Activated T-helper 1 cell treated with anti-CD3 and anti-CD28 coated beads, Interleukin-12 subunit alpha, Interleukin-12 subunit beta, Interleukin-2, Interleukin-4 antibody, amounts not matched to agents 30 ng/mL and 10 ng/mL and 1 ng/mL, durations not matched to agents 14 hours and 24 hours and 36 hours (primary cell): ENCODE measurements at regions of chr7 and their contacts with region 1.

Region 1: DNA sequence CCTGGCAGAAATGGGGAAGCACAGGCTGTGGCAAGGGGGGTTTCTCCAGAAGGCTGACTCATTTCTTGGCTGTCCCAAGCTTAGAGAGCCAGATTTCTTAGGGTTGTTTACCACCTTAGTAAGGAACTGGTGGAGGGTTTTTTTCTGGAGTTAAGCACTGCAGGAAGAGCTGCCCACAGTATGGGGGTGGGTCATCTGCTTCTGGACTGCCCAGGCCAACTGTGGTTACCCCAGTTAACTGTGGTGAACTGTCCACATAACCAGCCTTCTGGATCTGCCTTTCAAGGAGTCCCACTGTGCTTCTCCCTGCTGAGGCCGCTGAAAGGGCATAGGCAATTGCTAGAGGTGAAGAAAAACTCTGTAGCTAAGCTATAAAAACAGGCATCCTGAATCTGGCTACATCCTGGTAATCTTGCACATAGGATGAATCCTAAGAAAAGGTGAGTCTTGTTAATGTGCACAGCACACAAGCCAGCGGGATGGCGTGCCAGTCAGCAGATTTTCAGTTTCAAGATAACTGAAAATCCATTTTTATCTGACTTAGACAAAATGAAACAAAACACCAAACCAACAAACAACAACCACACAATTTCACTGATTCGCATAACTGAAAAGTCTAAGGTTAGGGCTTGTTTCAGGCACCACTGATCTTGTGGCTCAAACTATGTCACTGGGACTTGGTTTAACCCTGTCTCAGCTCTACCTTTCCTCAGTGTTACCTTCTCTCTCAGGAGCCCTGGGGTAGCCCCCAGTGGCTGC is 21.6 kb upstream of the TSPAN33 start:
- DNase-seq: peak; percentile 14
- H3K4me3 Mint-ChIP-seq: peak overlapping the region; percentile 22
- H3K27ac Mint-ChIP-seq: peak overlapping the region; percentile 85
- H3K4me1 Mint-ChIP-seq: peaks cover 39% of the 10 kb centered on the region
- H3K27me3 Mint-ChIP-seq: peaks cover 15% of the 10 kb centered on the region

Region 2: DNA sequence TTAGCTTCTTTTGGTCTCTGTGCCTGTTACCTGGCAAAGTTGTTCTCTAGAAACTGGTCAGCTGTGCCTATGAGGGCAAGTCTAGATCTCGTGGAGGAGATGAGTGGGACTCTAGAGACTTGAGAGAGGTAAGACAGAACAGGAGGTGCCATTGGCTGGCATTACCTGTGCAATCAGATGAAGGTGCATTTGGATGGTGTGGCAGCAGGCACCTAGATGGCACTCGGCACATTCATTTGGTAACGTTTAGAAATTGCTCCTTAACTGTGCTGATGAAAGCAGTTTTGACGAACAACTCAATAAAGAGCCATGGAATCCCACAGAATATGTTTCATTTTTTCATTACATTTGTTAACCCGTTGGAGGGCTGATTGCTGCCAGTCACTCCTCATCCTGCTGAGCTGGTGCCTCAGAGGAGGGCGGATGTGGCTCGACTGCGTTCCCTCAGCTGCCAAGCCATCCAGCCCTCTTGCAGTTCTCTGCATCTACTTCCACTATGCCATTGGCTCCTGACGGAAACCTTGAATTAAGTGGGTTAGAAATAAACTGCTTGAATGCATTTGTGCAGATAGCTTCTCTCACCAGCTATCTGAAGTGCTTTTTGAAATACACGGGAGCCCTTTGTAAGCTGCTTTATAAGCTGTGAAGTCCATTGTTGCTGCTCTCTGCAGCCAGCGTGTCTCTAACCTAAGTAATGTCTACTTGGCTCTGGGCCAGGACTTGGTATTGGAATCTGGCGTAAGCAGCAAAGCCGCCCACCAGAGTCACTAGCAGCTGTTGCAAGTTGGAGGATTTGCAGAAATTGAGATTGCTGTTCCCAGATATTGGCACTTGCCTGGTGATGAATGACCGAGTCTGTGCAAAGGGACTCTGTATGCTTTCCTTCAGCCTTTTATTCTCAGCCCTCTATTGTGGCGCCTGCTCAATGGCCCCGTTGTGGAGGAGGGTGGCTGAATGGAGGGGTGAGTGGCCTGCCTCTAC is 1179.1 kb before region 1 on chr7:
- intact Hi-C with region 1: no loop called
- DNase-seq: no peak
- H3K4me3 Mint-ChIP-seq: no peak overlapping the region
- H3K27ac Mint-ChIP-seq: no peak overlapping the region
- H3K4me1 Mint-ChIP-seq: peaks cover 7% of the 10 kb centered on the region
- H3K27me3 Mint-ChIP-seq: no peaks in the 10 kb centered on the region

Region 3: GRCh38 chr7:128963327-128963757 is 159.6 kb before region 1 on chr7:
- intact Hi-C with region 1: loop called (anchors 1 kb)
- DNase-seq: peak; percentile 34
- H3K4me3 Mint-ChIP-seq: peak overlapping the region; percentile 57
- H3K27ac Mint-ChIP-seq: peak overlapping the region; percentile 72
- H3K4me1 Mint-ChIP-seq: peaks cover 43% of the 10 kb centered on the region
- H3K27me3 Mint-ChIP-seq: no peaks in the 10 kb centered on the region

Region 4: DNA sequence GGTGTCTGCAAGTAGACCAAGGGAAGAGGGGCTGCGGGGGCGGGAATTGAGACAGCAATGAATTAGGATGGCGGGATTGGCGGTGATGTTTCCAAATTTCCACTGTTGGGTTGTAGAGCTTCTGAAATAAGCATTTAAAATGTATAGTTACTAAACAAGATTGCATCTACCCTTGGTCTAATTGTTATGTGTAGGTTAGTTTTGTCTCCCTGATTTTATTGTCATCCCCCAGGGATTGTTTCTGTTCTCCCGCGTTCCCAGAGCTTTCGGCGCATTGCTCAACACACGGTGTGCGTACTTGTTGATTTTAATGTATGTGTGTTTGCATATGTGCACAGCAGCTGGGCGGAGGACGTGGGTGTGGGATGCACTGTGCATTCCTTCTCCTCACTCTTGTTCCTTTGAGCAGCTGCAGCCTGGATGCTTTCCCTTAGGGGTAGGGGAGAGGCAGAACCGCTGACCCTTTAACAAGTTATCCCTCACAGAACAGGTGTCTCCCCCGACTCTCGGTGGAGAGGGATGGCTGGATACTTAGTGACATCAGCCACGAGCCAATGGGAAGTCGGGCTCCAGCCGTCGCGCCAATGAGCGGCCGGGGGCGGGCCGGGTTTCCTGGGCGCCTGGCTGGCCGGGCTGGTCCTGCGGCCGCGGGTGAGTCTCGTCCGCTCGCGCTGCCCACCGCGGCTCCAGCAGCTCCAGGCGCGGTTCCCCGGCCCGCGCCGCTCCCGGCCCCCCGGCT is 21.3 kb after region 1 on chr7 and contains the start of gene TSPAN33:
- intact Hi-C with region 1: loop called (anchors 1 kb)
- DNase-seq: peak; percentile 67
- H3K4me3 Mint-ChIP-seq: peak within 1 kb of the TSS; percentile 89
- H3K27ac Mint-ChIP-seq: peak within 1 kb of the TSS; percentile 27
- H3K4me1 Mint-ChIP-seq: peaks cover 16% of the 10 kb centered on the region
- H3K27me3 Mint-ChIP-seq: peaks cover 25% of the 10 kb centered on the region
- total RNA-seq, gene TSPAN33: 9.5 and 9.8 TPM in 2 replicates

Region 5: DNA sequence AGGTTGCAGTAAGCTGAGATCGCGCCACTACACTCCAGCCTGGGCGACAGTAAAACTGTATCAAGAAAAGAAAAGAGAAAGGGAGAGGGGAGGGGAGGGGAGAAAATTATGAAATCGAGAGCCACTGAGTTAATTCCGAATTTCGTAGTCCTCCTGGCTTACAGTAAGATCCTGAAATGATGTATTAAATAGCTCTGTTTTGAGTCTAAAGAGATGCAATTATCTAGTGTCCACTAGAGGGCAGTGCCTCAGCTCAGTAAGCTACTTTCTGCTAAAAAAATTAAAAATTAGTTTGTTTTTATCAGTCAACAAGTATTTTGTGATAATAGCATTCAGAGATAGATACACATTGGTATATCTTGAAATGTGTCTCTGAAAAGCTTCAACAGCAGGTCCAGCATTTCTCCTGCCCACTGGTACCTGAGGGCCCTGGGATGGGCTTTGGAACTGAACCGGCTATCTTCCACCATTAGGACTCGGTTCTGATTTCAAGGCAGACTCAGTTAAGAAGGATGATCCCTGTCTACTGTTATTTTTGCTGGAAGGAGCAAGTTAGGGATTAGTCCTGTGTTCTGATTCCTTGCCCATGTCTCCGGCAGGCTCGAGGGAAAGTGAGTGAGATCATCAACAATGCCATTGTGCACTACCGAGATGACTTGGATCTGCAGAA is 41.1 kb after region 1 on chr7:
- intact Hi-C with region 1: loop called (anchors 2 kb)
- DNase-seq: no peak
- H3K4me3 Mint-ChIP-seq: no peak overlapping the region
- H3K27ac Mint-ChIP-seq: no peak overlapping the region
- H3K4me1 Mint-ChIP-seq: peaks cover 5% of the 10 kb centered on the region
- H3K27me3 Mint-ChIP-seq: no peaks in the 10 kb centered on the region

Region 6: GRCh38 chr7:129530795-129531391 is 408.0 kb after region 1 on chr7:
- intact Hi-C with region 1: loop called (anchors 2 kb)
- DNase-seq: peak; percentile 8
- H3K4me3 Mint-ChIP-seq: no peak overlapping the region
- H3K27ac Mint-ChIP-seq: peak overlapping the region; percentile 79
- H3K4me1 Mint-ChIP-seq: peaks cover 12% of the 10 kb centered on the region
- H3K27me3 Mint-ChIP-seq: no peaks in the 10 kb centered on the region